Mammary epithelial cell (primary cell): ENCODE measurements at regions of chr19 and their contacts with region 1.

Region 1: GRCh38 chr19:51338563-51339312 is 3.2 kb downstream of the VSIG10L start:
- DNase-seq: peak; percentile 78
- H3K4me3 ChIP-seq: peak overlapping the region; percentile 59 to 68 (median 63)
- H3K27ac ChIP-seq: no peak overlapping the region
- H3K4me1 ChIP-seq: peaks cover 10% of the 10 kb centered on the region
- H3K27me3 ChIP-seq: no peaks in the 10 kb centered on the region
- CTCF ChIP-seq: peak; percentile 64 to 95

Region 2: GRCh38 chr19:51250786-51251467 is 87.8 kb before region 1 on chr19 and contains the start of gene SIGLECL1:
- CTCF ChIA-PET with region 1: no interaction called
- dilution Hi-C with region 1: no loop called
- in situ Hi-C with region 1: no loop called
- intact Hi-C with region 1: no loop called
- DNase-seq: no peak
- H3K4me3 ChIP-seq: no peak within 1 kb of the TSS
- H3K27ac ChIP-seq: no peak within 1 kb of the TSS
- H3K4me1 ChIP-seq: no peaks in the 10 kb centered on the region
- H3K27me3 ChIP-seq: no peaks in the 10 kb centered on the region
- CTCF ChIP-seq: no peak
- total RNA-seq, gene SIGLECL1: not detected

Region 3: GRCh38 chr19:51367565-51368365 is 29.0 kb after region 1 on chr19:
- CTCF ChIA-PET with region 1: interaction called, 4 read pairs
- dilution Hi-C with region 1: no loop called
- in situ Hi-C with region 1: no loop called
- intact Hi-C with region 1: loop called (anchors 1 kb)
- DNase-seq: peak; percentile 95
- H3K4me3 ChIP-seq: peak overlapping the region; percentile 61 to 68 (median 67)
- H3K27ac ChIP-seq: peak overlapping the region; percentile 58
- H3K4me1 ChIP-seq: peaks cover 19% of the 10 kb centered on the region
- H3K27me3 ChIP-seq: no peaks in the 10 kb centered on the region
- CTCF ChIP-seq: no peak

Region 4: DNA sequence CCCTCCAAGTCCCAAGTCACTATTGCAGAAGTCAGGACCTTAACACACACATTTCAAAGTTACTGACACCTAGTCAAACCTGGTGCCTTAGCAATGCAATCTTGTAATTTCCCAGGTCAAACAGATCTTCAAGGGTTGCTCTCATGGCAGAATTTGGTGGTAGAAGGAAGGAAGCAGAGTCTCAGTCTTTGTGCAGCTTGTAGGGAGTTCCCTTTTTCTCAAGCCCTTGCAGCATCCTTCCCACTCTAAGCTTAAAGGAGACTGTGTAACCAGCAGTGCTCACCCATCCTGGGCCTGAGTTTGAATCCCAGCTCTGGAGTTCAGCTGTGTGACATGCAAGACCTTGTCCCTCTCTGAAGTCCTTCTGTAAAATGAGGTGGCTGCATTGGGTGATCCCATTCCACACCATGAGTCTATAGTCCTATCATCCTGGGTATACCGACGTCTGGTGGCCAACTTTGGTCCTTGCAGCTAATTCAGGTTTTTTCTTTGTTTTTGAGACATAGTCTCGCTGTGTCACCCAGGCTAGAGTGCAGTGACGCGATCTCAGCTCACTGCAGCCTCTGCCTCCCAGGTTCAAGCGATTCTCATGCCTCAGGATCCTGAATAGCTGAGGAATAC is 68.9 kb after region 1 on chr19:
- CTCF ChIA-PET with region 1: no interaction called
- dilution Hi-C with region 1: loop called (anchors 5 kb)
- in situ Hi-C with region 1: no loop called
- intact Hi-C with region 1: loop called (anchors 1 kb)
- DNase-seq: peak; percentile 20
- H3K4me3 ChIP-seq: no peak overlapping the region
- H3K27ac ChIP-seq: no peak overlapping the region
- H3K4me1 ChIP-seq: no peaks in the 10 kb centered on the region
- H3K27me3 ChIP-seq: no peaks in the 10 kb centered on the region
- CTCF ChIP-seq: peak; percentile 22 to 61

Region 5: GRCh38 chr19:51439021-51439465 is 100.3 kb after region 1 on chr19:
- CTCF ChIA-PET with region 1: no interaction called
- dilution Hi-C with region 1: no loop called
- in situ Hi-C with region 1: no loop called
- intact Hi-C with region 1: loop called (anchors 1 kb)
- DNase-seq: peak; percentile 18
- H3K4me3 ChIP-seq: no peak overlapping the region
- H3K27ac ChIP-seq: no peak overlapping the region
- H3K4me1 ChIP-seq: no peaks in the 10 kb centered on the region
- H3K27me3 ChIP-seq: no peaks in the 10 kb centered on the region
- CTCF ChIP-seq: peak in 1 of 2 donors; percentile 50

Region 6: GRCh38 chr19:51660975-51661600 is 322.4 kb after region 1 on chr19:
- CTCF ChIA-PET with region 1: interaction called, 3 read pairs
- dilution Hi-C with region 1: no loop called
- in situ Hi-C with region 1: no loop called
- intact Hi-C with region 1: loop called (anchors 1 kb)
- DNase-seq: peak; percentile 55
- H3K4me3 ChIP-seq: no peak overlapping the region
- H3K27ac ChIP-seq: no peak overlapping the region
- H3K4me1 ChIP-seq: peaks cover 5% of the 10 kb centered on the region
- H3K27me3 ChIP-seq: no peaks in the 10 kb centered on the region
- CTCF ChIP-seq: peak; percentile 67 to 81